Activated CD4-positive, alpha-beta T cell treated with anti-CD3 and anti-CD28 coated beads, Interleukin-2, amount 10 ng/mL, durations not matched to agents 24 days and 14 days (primary cell): ENCODE measurements at regions of chr1 and their contacts with region 1.

Region 1: DNA sequence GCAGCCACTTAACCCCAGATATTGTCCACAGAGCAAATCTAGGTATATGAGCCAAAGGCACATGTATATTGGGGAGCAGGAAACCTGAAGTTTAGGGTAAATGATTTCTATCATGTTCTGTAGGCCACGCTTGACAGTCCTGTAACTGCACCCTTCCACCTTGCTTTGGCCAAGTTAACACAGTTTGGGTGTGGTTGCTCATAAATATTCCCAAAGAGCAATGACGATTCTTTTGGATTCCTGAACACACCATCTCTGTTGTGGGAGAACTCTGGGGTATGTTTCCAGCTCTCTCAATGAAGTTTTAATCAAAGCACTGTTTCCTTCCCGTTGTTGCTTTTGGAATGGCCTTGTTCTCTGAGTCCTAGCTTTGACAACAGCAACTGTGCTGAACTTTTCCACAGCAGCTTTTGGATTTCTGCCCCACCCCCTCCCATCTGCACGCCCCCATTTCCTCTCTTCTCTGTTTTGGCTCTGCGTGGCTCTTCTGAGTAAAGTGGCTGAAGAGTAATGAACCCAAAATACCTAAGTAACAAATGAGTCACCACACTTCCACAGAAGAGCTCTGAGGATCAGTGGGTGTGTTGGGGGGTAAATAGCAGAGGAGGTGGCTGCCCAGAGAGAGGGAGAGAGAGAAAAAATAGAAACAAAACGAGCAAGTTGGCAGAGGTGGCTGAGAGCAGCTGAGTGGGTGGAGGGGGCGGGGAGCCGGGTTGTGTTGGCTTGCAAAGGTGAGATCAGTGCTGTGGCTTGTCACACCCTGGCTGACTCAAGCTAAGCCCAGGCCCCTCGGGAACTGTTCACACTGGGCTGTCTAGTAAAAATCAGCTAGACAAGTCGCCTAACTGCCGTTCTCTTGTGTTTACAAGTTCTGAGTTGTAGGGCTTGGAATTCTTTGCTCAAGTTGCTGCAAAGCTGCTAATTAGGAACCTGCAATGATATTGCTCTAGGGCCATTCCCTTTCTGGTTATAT is 26.9 kb upstream of the RAP1A start:
- DNase-seq: peak; percentile 93
- H3K4me3 Mint-ChIP-seq: peak overlapping the region; percentile 53
- H3K27ac Mint-ChIP-seq: peak overlapping the region; percentile 94
- H3K4me1 Mint-ChIP-seq: peaks cover 68% of the 10 kb centered on the region
- H3K27me3 Mint-ChIP-seq: peaks cover 3% of the 10 kb centered on the region

Region 2: GRCh38 chr1:110630839-110631663 is 961.6 kb before region 1 on chr1:
- intact Hi-C with region 1: loop called (anchors 10 kb)
- DNase-seq: peak; percentile 96
- H3K4me3 Mint-ChIP-seq: no peak overlapping the region
- H3K27ac Mint-ChIP-seq: no peak overlapping the region
- H3K4me1 Mint-ChIP-seq: peaks cover 58% of the 10 kb centered on the region
- H3K27me3 Mint-ChIP-seq: no peaks in the 10 kb centered on the region

Region 3: DNA sequence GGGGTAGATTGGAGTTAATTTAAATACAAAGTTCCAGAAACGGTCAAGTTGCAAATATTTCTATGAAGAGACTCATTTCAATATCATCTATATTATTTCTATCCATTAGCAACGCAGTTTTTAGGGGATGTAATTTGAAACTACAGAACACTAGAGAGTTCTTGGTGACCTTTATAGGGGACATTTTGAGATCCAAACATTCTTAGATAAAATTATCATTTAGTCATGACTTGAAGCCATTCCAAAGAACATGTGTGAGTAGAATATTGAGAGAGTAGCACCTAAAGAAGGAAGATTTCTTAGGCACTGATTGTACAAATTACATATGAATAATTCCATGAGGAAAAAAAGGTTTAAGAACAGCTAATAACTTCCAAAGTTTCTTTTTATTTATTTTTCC is 283.0 kb before region 1 on chr1:
- intact Hi-C with region 1: no loop called
- DNase-seq: no peak
- H3K4me3 Mint-ChIP-seq: no peak overlapping the region
- H3K27ac Mint-ChIP-seq: no peak overlapping the region
- H3K4me1 Mint-ChIP-seq: no peaks in the 10 kb centered on the region
- H3K27me3 Mint-ChIP-seq: peaks cover 18% of the 10 kb centered on the region

Region 4: GRCh38 chr1:111481387-111482221 is 111.1 kb before region 1 on chr1:
- intact Hi-C with region 1: loop called (anchors 1 kb)
- DNase-seq: peak; percentile 89
- H3K4me3 Mint-ChIP-seq: no peak overlapping the region
- H3K27ac Mint-ChIP-seq: no peak overlapping the region
- H3K4me1 Mint-ChIP-seq: peaks cover 23% of the 10 kb centered on the region
- H3K27me3 Mint-ChIP-seq: peaks cover 16% of the 10 kb centered on the region

Region 5: GRCh38 chr1:111516005-111516535 is 76.6 kb before region 1 on chr1:
- intact Hi-C with region 1: loop called (anchors 1 kb)
- DNase-seq: peak; percentile 75
- H3K4me3 Mint-ChIP-seq: peak overlapping the region; percentile 59
- H3K27ac Mint-ChIP-seq: peak overlapping the region; percentile 81
- H3K4me1 Mint-ChIP-seq: peaks cover 49% of the 10 kb centered on the region
- H3K27me3 Mint-ChIP-seq: no peaks in the 10 kb centered on the region

Region 6: DNA sequence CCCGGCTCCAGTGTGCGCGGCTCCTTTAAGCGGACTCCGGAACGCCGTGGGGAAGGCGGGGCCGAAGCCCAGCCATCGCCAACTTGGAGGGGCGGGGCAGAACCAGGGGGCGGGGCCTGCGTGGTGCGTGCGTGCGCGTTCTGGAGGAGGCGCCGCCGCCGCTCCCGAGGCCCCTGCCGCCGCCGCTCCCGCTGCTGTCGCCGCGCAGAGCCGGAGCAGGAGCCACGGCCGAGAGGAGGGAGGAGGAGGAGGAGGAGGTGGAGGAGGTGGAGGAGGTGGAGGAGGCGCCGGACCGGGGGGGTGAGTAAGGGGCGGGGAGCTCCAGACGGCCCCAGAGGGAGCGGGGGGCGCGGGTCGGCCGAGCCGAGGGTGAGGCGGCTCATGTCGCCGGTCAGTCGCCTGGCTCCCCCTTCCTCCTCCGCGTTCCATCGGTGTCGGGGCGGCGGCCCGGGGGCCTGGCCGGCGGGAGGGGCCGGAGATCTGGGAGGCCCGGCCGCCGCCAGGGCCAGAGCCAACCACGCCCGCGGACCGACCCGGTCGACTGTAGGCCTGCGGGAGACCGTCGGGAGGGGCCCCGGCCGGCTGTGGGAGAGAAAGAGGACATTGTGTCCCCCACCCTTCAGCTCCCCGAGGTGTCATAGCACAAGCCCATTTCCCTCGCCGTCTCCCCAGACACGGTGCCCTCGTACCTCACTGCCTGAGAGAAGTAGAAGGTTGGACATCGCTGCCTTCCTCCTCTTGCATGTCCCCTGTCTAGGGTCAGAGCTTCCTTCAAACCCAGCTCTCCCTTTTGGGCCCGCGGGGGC is 27.2 kb after region 1 on chr1 and contains the start of gene RAP1A:
- intact Hi-C with region 1: loop called (anchors 1 kb)
- DNase-seq: peak; percentile 97
- H3K4me3 Mint-ChIP-seq: peak within 1 kb of the TSS; percentile 99
- H3K27ac Mint-ChIP-seq: peak within 1 kb of the TSS; percentile 93
- H3K4me1 Mint-ChIP-seq: peaks cover 66% of the 10 kb centered on the region
- H3K27me3 Mint-ChIP-seq: no peaks in the 10 kb centered on the region
- total RNA-seq, gene RAP1A: 306 and 307 TPM in 2 replicates

Region 7: GRCh38 chr1:111755331-111756123 is 162.9 kb after region 1 on chr1 and contains the start of gene DDX20:
- intact Hi-C with region 1: loop called (anchors 2 kb)
- DNase-seq: peak; percentile 98
- H3K4me3 Mint-ChIP-seq: peak within 1 kb of the TSS; percentile 88
- H3K27ac Mint-ChIP-seq: peak within 1 kb of the TSS; percentile 92
- H3K4me1 Mint-ChIP-seq: peaks cover 41% of the 10 kb centered on the region
- H3K27me3 Mint-ChIP-seq: peaks cover 8% of the 10 kb centered on the region
- total RNA-seq, gene DDX20: 18.7 and 24.2 TPM in 2 replicates